Activated T-helper 1 cell treated with anti-CD3 and anti-CD28 coated beads, Interleukin-12 subunit alpha, Interleukin-12 subunit beta, Interleukin-2, Interleukin-4 antibody, amounts not matched to agents 30 ng/mL and 10 ng/mL and 1 ng/mL, durations not matched to agents 14 hours and 24 hours and 36 hours (primary cell): ENCODE measurements at regions of chr16 and their contacts with region 1.

Region 1: DNA sequence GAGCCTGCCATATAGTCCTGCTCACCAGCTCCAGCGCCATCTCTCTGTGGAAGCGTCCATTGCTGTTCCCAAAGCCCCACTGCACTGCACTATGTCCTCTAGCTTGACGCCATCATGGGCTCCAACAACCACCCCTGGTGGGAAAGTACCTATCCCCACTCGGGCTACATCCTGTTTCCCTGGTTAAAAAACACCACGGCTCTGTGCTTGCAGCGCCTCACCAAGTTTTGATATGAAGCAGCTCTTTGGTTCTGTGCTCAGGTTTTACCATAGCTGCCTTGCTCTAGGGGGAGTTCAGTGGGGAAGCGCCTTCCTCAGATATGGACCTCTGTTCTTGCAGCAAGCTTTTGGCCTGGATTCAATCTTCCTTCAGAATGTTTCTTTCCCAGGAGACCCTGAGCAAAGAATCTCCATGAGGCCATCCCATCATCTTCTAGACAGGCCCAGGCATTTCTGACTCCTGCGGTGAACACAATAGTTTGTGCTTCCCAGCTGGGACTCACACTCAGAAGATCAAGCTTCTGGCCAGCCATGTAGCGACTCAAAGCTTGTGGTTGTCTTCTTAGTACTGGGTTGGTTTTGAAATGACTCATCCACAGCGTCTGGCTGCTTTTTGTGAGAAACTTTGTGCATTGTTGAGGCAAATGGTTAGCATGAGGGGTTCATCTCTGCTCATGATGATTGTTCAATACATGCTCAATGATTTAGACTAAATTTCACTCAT is 39.5 kb downstream of the DYNLRB2 start:
- DNase-seq: peak; percentile 82
- H3K4me3 Mint-ChIP-seq: peak overlapping the region; percentile 81
- H3K27ac Mint-ChIP-seq: peak overlapping the region; percentile 100
- H3K4me1 Mint-ChIP-seq: peaks cover 55% of the 10 kb centered on the region
- H3K27me3 Mint-ChIP-seq: no peaks in the 10 kb centered on the region

Region 2: DNA sequence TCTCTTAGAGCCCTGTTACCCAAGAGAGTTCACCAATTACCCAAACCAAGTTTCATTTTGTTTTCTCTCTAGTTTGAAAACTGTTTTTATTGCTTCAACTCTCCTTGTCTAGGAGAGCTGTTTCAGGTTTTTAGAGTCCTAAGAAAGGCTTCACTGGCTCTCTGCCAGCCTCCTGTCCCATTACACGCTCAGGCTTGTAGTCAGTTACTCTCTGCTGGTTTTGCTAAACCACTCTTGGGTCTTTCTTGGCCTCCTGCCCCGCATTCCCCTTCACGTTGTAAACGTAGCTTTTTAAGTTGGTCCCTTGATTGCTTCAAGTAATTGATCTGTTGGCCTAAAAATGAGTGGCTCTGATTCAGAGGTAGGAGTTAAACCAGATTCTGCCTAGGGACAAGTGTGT is 1508.8 kb before region 1 on chr16:
- intact Hi-C with region 1: loop called (anchors 10 kb)
- DNase-seq: no peak
- H3K4me3 Mint-ChIP-seq: no peak overlapping the region
- H3K27ac Mint-ChIP-seq: peak overlapping the region; percentile 21
- H3K4me1 Mint-ChIP-seq: peaks cover 74% of the 10 kb centered on the region
- H3K27me3 Mint-ChIP-seq: peaks cover 5% of the 10 kb centered on the region

Region 3: GRCh38 chr16:80540516-80541272 is 39.6 kb before region 1 on chr16 and contains the start of gene DYNLRB2:
- intact Hi-C with region 1: loop called (anchors 1 kb)
- DNase-seq: peak; percentile 92
- H3K4me3 Mint-ChIP-seq: peak within 1 kb of the TSS; percentile 87
- H3K27ac Mint-ChIP-seq: peak within 1 kb of the TSS; percentile 96
- H3K4me1 Mint-ChIP-seq: peaks cover 38% of the 10 kb centered on the region
- H3K27me3 Mint-ChIP-seq: peaks cover 2% of the 10 kb centered on the region
- total RNA-seq, gene DYNLRB2: not detected in 2 replicates

Region 4: DNA sequence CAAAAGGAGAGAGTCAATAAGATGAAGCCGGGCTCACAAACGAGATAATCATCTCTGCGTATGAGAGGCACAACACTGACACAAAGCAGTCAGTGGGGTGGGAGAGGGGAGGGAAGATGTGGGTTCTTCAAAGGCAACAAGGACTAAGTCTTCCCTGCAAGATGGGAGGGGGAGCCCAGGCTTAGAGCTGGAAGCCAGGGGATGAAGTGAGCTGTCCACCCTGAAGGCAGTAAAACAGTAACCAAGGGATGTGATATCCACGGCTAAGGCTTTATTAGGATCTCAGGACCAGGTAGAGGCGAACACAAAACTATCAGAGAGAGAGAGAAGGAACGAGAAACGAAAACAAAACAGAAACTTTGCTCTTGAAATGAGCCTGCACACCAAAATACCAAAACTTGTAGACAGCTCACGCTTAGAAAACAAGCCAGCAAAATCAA is 76.5 kb after region 1 on chr16:
- intact Hi-C with region 1: loop called (anchors 1 kb)
- DNase-seq: peak; percentile 42
- H3K4me3 Mint-ChIP-seq: peak overlapping the region; percentile 85
- H3K27ac Mint-ChIP-seq: peak overlapping the region; percentile 91
- H3K4me1 Mint-ChIP-seq: peaks cover 43% of the 10 kb centered on the region
- H3K27me3 Mint-ChIP-seq: no peaks in the 10 kb centered on the region

Region 5: GRCh38 chr16:80759419-80760162 is 179.3 kb after region 1 on chr16:
- intact Hi-C with region 1: loop called (anchors 1 kb)
- DNase-seq: no peak
- H3K4me3 Mint-ChIP-seq: peak overlapping the region; percentile 23
- H3K27ac Mint-ChIP-seq: peak overlapping the region; percentile 67
- H3K4me1 Mint-ChIP-seq: peaks cover 44% of the 10 kb centered on the region
- H3K27me3 Mint-ChIP-seq: no peaks in the 10 kb centered on the region

Region 6: DNA sequence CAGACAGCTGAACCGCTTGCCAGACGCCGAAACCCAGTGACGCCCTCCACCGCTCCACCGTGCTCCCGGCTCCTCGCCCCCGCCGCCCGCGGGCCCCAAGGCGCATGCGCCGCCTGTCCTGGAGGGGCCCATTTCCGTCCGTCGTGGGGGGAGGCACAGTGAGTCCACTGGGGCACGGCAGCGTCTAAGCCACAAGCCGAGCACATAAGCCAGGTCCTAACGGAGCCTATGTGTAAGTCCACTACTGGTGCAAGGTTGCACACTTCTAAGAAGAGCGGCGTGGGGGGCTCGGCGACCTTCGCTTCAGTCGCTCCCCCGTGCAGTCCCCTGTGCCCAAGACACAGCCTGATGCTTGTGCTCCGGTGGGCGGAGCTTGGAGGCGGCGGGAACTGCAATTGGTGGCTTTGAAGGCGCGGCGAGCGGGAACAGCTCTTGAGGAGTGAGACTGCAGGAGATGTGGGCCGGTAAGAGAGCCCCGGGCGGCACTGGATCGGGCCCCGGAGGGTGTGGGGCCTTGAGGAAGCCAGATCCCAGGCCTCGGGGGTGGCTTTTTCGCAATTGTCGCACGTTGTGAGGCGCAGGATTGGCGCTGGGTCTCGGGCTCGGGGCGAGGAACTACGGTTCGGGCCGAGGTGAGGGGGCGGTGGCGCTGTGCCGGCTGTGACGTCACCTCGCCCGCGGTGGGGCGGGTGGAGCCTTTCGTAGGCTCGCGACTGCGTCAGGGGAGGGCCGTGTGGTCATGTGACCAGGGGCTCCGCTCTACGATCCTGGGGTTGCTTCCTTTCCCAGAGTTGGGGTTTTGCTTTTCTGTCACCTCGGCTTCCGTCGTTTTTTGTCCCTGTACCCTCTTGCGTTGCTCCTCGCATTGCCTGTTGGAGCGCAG is 426.8 kb after region 1 on chr16 and contains the starts of genes CENPN and CMC2:
- intact Hi-C with region 1: loop called (anchors 1 kb)
- DNase-seq: peak; percentile 97
- H3K4me3 Mint-ChIP-seq: peak within 1 kb of the TSS; percentile 100
- H3K27ac Mint-ChIP-seq: peak within 1 kb of the TSS; percentile 100
- H3K4me1 Mint-ChIP-seq: peaks cover 61% of the 10 kb centered on the region
- H3K27me3 Mint-ChIP-seq: peaks cover 2% of the 10 kb centered on the region
- total RNA-seq, gene CENPN: 65.6 and 67.8 TPM in 2 replicates
- total RNA-seq, gene CMC2: 141 and 156 TPM in 2 replicates